Activated CD4-positive, alpha-beta T cell treated with anti-CD3 and anti-CD28 coated beads, Interleukin-2, amount 10 ng/mL, durations not matched to agents 7 days and 5 days (primary cell): ENCODE measurements at regions of chr4 and their contacts with region 1.

Region 1: GRCh38 chr4:17347445-17347844 is 164.4 kb downstream of the QDPR start:
- DNase-seq: peak; percentile 51
- H3K4me3 Mint-ChIP-seq: no peak overlapping the region
- H3K27ac Mint-ChIP-seq: peak overlapping the region; percentile 74
- H3K4me1 Mint-ChIP-seq: no peaks in the 10 kb centered on the region
- H3K27me3 Mint-ChIP-seq: no peaks in the 10 kb centered on the region

Region 2: GRCh38 chr4:17336524-17336961 is 10.9 kb before region 1 on chr4:
- CTCF ChIA-PET with region 1: interaction called, 15 read pairs
- POLR2A ChIA-PET with region 1: no interaction called
- DNase-seq: peak; percentile 84
- H3K4me3 Mint-ChIP-seq: peak overlapping the region; percentile 2
- H3K27ac Mint-ChIP-seq: peak overlapping the region; percentile 72
- H3K4me1 Mint-ChIP-seq: peaks cover 33% of the 10 kb centered on the region
- H3K27me3 Mint-ChIP-seq: peaks cover 5% of the 10 kb centered on the region